GM12878 (cell line): ENCODE measurements at regions of chrX and their contacts with region 1.

Region 1: DNA sequence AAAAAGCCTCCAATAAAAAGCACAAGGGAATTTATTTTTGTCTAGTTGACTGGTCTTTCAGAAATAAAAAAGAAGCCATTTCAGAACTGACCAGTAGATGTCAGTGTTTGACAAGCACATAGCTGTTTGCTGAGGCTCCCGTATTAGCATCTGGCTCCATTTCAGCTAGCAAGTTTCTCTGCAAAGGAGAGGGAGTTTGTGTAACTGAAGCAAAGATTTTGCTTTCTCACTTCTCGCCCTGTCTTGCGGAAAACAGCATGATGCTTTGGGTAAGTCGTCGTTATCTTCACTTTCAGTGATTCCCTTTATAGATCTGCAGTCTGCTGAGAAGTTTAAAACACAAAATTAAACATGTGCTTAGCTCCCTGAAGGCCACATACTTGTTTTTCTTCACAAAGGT is 85.5 kb downstream of the CT47B1 start:
- DNase-seq: peak; percentile 47
- ATAC-seq: peak; percentile 86
- H3K4me3 ChIP-seq: no peak overlapping the region
- H3K27ac ChIP-seq: no peak overlapping the region
- H3K4me1 ChIP-seq: no peaks in the 10 kb centered on the region
- H3K27me3 ChIP-seq: no peaks in the 10 kb centered on the region
- CTCF ChIP-seq: peak; percentile 71 to 85 (median 79)
- EP300 ChIP-seq: no peak
- POLR2A ChIP-seq: no peak
- RAD21 ChIP-seq: peak; percentile 96

Region 2: GRCh38 chrX:120499301-120500072 is 290.6 kb before region 1 on chrX:
- CTCF ChIA-PET with region 1: interaction called, 4 read pairs
- POLR2A ChIA-PET with region 1: no interaction called
- RAD21 ChIA-PET with region 1: no interaction called
- SMC1A ChIA-PET with region 1: interaction called, 3 read pairs
- in situ Hi-C with region 1: no loop called
- intact Hi-C with region 1: loop called (anchors 1 kb)
- DNase-seq: no peak
- ATAC-seq: no peak
- H3K4me3 ChIP-seq: no peak overlapping the region
- H3K27ac ChIP-seq: no peak overlapping the region
- H3K4me1 ChIP-seq: no peaks in the 10 kb centered on the region
- H3K27me3 ChIP-seq: no peaks in the 10 kb centered on the region
- CTCF ChIP-seq: no peak
- EP300 ChIP-seq: no peak
- POLR2A ChIP-seq: no peak
- RAD21 ChIP-seq: no peak

Region 3: GRCh38 chrX:121000587-121000986 is 210.5 kb after region 1 on chrX:
- CTCF ChIA-PET with region 1: interaction called, 12 read pairs
- POLR2A ChIA-PET with region 1: no interaction called
- RAD21 ChIA-PET with region 1: interaction called, 7 read pairs
- SMC1A ChIA-PET with region 1: interaction called, 17 read pairs
- in situ Hi-C with region 1: no loop called
- intact Hi-C with region 1: no loop called
- DNase-seq: peak; percentile 5
- ATAC-seq: peak; percentile 60
- H3K4me3 ChIP-seq: no peak overlapping the region
- H3K27ac ChIP-seq: no peak overlapping the region
- H3K4me1 ChIP-seq: no peaks in the 10 kb centered on the region
- H3K27me3 ChIP-seq: no peaks in the 10 kb centered on the region
- CTCF ChIP-seq: peak in 1 of 3 experiments; percentile 35; a peak in 2 of 6 replicates
- EP300 ChIP-seq: no peak
- POLR2A ChIP-seq: no peak
- RAD21 ChIP-seq: peak; percentile 64

Region 4: GRCh38 chrX:121011254-121011653 is 221.1 kb after region 1 on chrX:
- CTCF ChIA-PET with region 1: no interaction called
- POLR2A ChIA-PET with region 1: no interaction called
- RAD21 ChIA-PET with region 1: no interaction called
- SMC1A ChIA-PET with region 1: no interaction called
- in situ Hi-C with region 1: no loop called
- intact Hi-C with region 1: no loop called
- DNase-seq: no peak
- ATAC-seq: no peak
- H3K4me3 ChIP-seq: no peak overlapping the region
- H3K27ac ChIP-seq: no peak overlapping the region
- H3K4me1 ChIP-seq: no peaks in the 10 kb centered on the region
- H3K27me3 ChIP-seq: no peaks in the 10 kb centered on the region
- CTCF ChIP-seq: no peak
- EP300 ChIP-seq: no peak
- POLR2A ChIP-seq: no peak
- RAD21 ChIP-seq: no peak

Region 5: DNA sequence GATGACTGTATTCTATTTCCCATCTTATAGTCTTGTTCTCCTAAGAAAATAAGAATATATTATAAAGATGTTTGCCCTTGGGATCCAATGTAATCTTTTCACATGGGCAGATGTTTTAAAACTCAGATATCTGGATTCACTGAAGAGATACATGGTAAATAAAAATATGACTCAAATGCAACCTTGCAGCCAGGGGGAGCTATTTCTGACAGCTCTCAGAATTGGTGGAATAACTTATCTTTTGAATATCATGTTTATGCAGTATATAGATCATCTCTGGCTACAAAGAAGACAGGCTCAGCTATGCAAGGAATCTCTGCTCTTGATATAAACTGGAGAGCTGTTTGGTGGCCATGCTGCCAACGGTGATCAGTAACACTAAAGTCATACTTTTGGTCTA is 532.0 kb after region 1 on chrX:
- CTCF ChIA-PET with region 1: interaction called, 16 read pairs
- POLR2A ChIA-PET with region 1: no interaction called
- RAD21 ChIA-PET with region 1: interaction called, 4 read pairs
- SMC1A ChIA-PET with region 1: no interaction called
- in situ Hi-C with region 1: no loop called
- intact Hi-C with region 1: no loop called
- DNase-seq: no peak
- ATAC-seq: no peak
- H3K4me3 ChIP-seq: no peak overlapping the region
- H3K27ac ChIP-seq: no peak overlapping the region
- H3K4me1 ChIP-seq: no peaks in the 10 kb centered on the region
- H3K27me3 ChIP-seq: no peaks in the 10 kb centered on the region
- CTCF ChIP-seq: peak; percentile 31 to 48 (median 38); a peak in 3 of 6 replicates
- EP300 ChIP-seq: no peak
- POLR2A ChIP-seq: no peak
- RAD21 ChIP-seq: peak; percentile 10; the same call in 1 of the 2 replicates

Region 6: DNA sequence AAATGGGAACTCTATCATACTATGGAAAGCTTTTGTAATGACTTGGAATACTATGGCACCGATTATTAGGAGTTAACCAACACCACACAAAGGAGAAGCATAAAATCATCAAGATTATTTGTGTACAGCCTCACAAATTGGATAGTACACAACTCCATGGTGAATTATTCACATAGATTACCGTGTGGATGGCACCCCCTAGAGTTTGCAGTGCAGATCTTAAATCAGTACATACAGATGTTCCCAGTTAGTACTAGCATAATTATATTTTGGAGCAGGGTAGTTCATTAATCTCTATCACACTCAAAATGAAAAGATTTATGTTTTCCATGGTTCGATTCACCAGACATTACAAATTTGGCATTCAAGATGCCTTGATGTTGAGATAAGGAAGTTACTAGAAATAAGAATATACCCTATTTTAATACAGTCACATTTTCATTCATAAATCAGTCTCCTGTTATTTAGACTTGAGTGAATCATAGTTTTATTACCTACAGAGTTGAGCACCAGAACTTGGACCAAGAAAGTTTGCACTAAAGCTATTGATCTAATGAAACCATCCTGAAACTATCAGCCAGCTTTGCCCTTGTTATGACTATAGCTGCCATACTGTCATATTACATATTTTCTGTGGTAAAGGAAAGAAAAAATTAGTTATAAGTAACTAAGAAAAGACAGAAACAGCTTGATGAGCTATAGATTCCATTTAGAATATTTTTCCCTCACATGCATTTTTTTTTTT is 789.1 kb after region 1 on chrX:
- CTCF ChIA-PET with region 1: interaction called, 20 read pairs
- POLR2A ChIA-PET with region 1: no interaction called
- RAD21 ChIA-PET with region 1: interaction called, 12 read pairs
- SMC1A ChIA-PET with region 1: interaction called, 15 read pairs
- in situ Hi-C with region 1: loop called (anchors 5 kb)
- intact Hi-C with region 1: loop called (anchors 2 kb)
- DNase-seq: peak; percentile 4
- ATAC-seq: peak; percentile 92
- H3K4me3 ChIP-seq: no peak overlapping the region
- H3K27ac ChIP-seq: no peak overlapping the region
- H3K4me1 ChIP-seq: no peaks in the 10 kb centered on the region
- H3K27me3 ChIP-seq: no peaks in the 10 kb centered on the region
- CTCF ChIP-seq: peak; percentile 44 to 54 (median 51); a peak in 5 of 6 replicates
- EP300 ChIP-seq: no peak
- POLR2A ChIP-seq: no peak
- RAD21 ChIP-seq: peak; percentile 74